Motor neuron (in vitro differentiated cells): ENCODE measurements at regions of chr6 and their contacts with region 1.

Region 1: DNA sequence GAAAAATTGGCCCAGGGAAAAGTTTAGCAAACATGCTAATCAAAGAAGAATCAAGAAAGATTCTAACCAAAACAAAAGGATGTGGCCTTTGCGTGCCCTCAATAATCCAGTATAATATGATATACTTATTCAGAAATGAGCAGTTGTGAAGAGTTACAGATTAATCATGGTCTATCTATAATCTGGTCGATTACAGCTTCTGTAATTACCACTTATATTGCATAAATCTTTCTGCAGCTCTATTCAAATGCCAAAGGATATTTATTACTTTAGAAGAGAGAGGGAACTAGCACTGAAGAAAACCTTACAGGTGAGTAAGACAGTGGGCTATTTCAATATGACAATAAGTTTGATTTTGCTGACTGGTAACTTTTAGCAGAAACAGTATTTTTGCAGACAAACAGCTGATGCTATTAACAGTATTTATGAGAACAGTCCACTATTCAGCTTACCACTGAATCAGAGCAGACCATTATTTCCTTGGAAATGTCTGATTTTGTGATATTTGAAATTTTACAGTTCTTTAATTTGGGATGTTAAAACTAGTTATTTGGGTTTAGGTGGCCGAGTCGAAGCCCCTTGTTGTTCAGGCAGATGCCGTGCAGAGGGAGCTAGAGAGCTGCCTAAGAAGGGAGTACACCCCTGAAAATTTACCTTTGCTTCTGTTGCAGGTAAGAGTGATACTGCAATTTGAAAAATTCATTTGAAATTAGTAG is 92.2 kb downstream of the CEP57L1 start:
- ATAC-seq: peak in 6 of 8 experiments; percentile 26 to 69 (median 41)
- H3K4me3 ChIP-seq: no peak overlapping the region
- H3K27ac ChIP-seq: no peak overlapping the region
- H3K4me1 ChIP-seq: no peaks in the 10 kb centered on the region

Region 2: DNA sequence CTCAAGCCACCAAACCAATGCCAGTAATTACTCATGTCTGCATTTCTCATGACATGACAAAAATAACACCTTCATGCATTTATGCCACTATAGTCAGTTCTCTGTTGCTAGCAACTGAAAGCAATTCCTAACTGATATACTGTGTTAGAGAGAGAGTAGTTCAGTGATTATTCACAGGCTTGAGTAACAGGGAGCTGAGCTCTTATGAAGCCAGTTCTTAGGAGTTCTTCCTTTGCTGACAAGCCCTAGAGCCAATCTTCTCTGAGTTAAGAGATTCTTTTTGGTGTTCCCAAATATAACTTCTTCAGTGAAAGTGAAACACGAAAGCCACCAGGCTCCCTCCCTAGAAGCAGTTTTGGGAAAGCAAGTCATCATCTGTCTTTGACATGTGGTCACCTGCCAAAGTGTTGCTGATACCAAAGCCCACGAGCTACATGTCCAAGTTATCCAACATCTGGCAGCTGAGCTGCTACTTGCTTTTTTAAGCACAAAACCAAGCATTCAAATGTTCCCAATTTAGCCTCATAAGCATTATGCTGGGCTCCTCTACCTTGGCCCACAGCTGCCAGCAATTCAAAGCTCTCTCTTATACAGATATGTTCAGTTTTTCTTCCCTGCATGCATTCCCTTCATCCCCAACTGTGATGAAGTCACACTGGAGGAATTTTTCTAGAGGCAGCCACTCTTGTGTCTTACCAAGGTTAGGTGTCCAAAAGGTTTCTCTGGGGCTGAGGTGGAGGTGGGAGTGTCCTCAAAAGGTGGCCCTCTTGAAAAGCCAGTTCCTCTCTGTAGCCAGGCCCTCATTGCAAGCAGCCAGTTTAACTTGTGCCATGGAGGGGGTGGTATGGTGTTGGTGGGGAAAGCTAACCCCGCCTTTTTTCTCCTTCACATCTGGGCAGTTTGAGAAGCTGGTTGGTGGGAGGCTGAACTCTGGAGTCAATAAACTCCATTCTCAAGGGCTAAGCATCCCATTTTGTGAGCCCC is 432.0 kb before region 1 on chr6:
- in situ Hi-C with region 1: no loop called
- ATAC-seq: peak in 2 of 8 experiments; percentile 48 to 61
- H3K4me3 ChIP-seq: no peak overlapping the region
- H3K27ac ChIP-seq: no peak overlapping the region
- H3K4me1 ChIP-seq: peaks cover 0 to 10% of the 10 kb centered on the region in 2 donors

Region 3: DNA sequence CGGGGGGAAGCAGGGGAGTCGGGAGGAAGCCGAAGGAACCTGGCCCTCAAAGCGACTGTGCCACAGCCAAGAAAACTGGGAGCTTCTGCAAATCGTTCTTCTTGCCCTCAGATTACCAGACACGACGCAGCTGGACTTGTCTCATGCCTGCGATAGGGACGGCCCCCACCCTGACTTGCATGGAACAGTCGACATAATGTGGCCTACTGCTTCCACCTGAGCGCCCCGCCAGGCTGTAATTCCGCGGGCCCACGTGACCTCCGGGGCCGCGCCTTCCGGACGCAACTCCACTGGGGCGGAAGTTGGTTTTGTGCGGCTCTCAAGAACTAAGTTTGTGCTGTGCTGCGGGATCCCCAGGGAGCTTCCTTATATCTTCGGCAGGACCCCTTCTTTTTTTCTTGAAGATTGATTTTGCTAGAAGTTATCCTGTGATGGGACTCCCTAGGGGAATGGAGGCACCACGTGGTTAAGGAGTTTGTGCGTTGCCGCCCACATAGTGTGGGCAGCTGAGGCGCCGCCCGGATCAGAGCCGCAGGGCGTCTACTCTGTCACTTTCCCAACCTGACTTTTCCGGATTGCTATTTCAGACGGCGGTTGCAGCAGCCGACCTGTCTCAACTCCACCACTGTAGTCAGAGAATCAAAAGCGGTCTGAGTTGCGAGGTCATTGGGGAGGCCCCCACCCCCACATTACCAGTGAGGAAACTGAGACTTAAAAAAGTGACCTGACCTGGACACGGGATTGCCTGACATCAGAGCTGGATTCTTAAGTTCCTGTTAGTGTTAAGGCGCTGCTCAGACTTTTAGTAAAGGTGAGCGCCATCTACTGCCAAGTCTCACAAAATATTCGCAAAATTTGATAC is 195.2 kb after region 1 on chr6:
- in situ Hi-C with region 1: loop called in 4 of 9 experiments (anchors 25 kb)
- ATAC-seq: peak; percentile 64 to 85 (median 78)
- H3K4me3 ChIP-seq: peak overlapping the region; percentile 57 to 96 (median 74)
- H3K27ac ChIP-seq: peak overlapping the region; percentile 100
- H3K4me1 ChIP-seq: peaks cover 9 to 11% of the 10 kb centered on the region in 2 donors

Region 4: DNA sequence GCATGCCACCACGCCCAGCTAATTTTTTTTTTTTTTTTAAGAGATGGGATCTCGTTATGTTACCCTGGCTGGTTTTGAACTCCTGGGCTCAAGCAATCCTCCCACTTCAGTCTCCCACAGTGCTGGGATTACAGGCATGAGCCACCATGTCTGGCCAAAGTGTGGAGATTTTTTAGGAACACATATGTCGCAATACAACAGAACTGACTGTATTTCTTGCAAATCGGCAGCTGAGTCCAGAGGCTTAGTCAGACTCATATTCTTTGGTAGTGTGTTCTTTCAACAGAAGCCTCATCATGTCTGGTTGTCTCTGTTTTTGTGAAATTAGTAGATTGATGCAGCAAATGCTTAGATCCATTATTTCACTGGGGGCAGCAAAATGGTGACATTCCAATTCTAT is 218.6 kb after region 1 on chr6:
- in situ Hi-C with region 1: loop called in 2 of 9 experiments (anchors 25 kb)
- ATAC-seq: peak in 2 of 8 experiments; percentile 52 to 81
- H3K4me3 ChIP-seq: no peak overlapping the region
- H3K27ac ChIP-seq: no peak overlapping the region
- H3K4me1 ChIP-seq: no peaks in the 10 kb centered on the region